ENCODE measurements at regions of chr19 and their contacts with region 1.

Region 1: GRCh38 chr19:39532233-39533002 is at the start of gene EID2B:
- DNase-seq: peak; percentile 94
- ATAC-seq: peak; percentile 96
- H3K4me3 ChIP-seq: peak within 1 kb of the TSS; percentile 98
- H3K27ac ChIP-seq: peak within 1 kb of the TSS; percentile 57
- H3K4me1 ChIP-seq: no peaks in the 10 kb centered on the region
- H3K27me3 ChIP-seq: no peaks in the 10 kb centered on the region
- CTCF ChIP-seq: peak; percentile 100; a peak in 5 of 6 replicates
- EP300 ChIP-seq: no peak
- POLR2A ChIP-seq: peak; percentile 79
- RAD21 ChIP-seq: peak; percentile 88
- polyA plus RNA-seq, gene EID2B: 5.8 to 6.1 TPM

Region 2: GRCh38 chr19:39125554-39126311 is 406.7 kb before region 1 on chr19 and contains the start of gene PAK4:
- CTCF ChIA-PET with region 1: interaction called, 4 read pairs
- POLR2A ChIA-PET with region 1: no interaction called
- RAD21 ChIA-PET with region 1: no interaction called
- SMC1A ChIA-PET with region 1: no interaction called
- in situ Hi-C with region 1: loop called (anchors 5 kb)
- intact Hi-C with region 1: loop called (anchors 10 kb)
- DNase-seq: peak; percentile 82
- ATAC-seq: peak; percentile 98
- H3K4me3 ChIP-seq: peak within 1 kb of the TSS; percentile 87
- H3K27ac ChIP-seq: peak within 1 kb of the TSS; percentile 64
- H3K4me1 ChIP-seq: peaks cover under 1% of the 10 kb centered on the region; the same call in 1 of the 2 replicates
- H3K27me3 ChIP-seq: no peaks in the 10 kb centered on the region
- CTCF ChIP-seq: no peak
- EP300 ChIP-seq: no peak
- POLR2A ChIP-seq: peak; percentile 92
- RAD21 ChIP-seq: no peak
- polyA plus RNA-seq, gene PAK4: 0.08 to 0.37 TPM

Region 3: GRCh38 chr19:39397360-39398296 is 134.8 kb before region 1 on chr19:
- CTCF ChIA-PET with region 1: interaction called, 20 read pairs
- POLR2A ChIA-PET with region 1: no interaction called
- RAD21 ChIA-PET with region 1: interaction called, 9 read pairs
- SMC1A ChIA-PET with region 1: no interaction called
- in situ Hi-C with region 1: no loop called
- intact Hi-C with region 1: no loop called
- DNase-seq: no peak
- ATAC-seq: peak; percentile 78
- H3K4me3 ChIP-seq: peak overlapping the region; percentile 26
- H3K27ac ChIP-seq: peak overlapping the region; percentile 99
- H3K4me1 ChIP-seq: peaks cover 54% of the 10 kb centered on the region
- H3K27me3 ChIP-seq: no peaks in the 10 kb centered on the region
- CTCF ChIP-seq: peak; percentile 97 to 98 (median 98); a peak in 5 of 6 replicates
- EP300 ChIP-seq: peak in 1 of 2 experiments; percentile 4; a peak in 1 of 4 replicates
- POLR2A ChIP-seq: no peak; the same call in 1 of the 2 replicates
- RAD21 ChIP-seq: peak; percentile 94

Region 4: DNA sequence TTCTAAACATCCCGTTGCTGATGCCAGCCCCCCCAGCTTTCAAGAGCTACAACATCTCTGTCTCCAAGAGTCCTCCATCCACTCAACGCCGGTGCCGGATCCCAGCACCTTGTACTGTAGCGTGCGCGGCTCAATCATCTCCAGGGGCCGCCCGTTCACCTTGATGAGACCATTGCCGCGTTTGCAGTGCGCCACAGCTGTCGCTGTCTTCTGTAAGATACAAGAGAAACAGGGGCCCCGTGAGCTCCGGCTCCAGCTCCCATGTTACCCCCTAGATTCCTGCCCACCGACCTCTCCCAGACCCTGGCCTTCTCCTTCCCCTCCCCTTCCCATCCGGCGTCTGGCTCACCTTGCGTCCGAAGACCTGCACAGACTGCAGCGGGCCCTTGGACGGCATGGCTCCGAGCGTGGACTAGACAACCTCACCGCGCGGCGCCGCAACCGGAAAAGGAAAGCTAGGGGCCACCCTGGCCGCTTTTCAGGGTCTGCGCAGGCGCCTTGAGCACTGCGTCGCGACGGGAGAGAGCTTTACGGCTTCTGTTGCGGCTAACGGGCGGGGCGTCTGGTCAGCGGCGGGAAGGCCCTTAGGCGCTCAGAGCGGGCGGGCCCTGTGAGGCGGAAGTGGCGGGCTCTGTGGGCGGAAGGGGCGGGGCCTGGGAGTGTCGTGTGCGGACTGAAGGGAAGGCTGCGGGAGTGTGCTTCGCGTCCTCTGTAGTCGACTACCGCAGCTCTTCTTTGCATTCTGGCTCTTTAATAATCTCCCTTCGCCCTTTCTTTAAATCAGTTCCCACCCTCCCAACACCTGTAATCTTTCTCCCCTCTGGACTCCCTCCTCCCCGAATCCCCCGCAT is 96.7 kb before region 1 on chr19 and contains the start of gene RPS16:
- CTCF ChIA-PET with region 1: interaction called, 63 read pairs
- POLR2A ChIA-PET with region 1: interaction called, 7 read pairs
- RAD21 ChIA-PET with region 1: interaction called, 14 read pairs
- SMC1A ChIA-PET with region 1: interaction called, 26 read pairs
- in situ Hi-C with region 1: loop called (anchors 5 kb)
- intact Hi-C with region 1: loop called (anchors 2 kb)
- DNase-seq: peak; percentile 88
- ATAC-seq: peak; percentile 88
- H3K4me3 ChIP-seq: peak within 1 kb of the TSS; percentile 97
- H3K27ac ChIP-seq: peak within 1 kb of the TSS; percentile 91
- H3K4me1 ChIP-seq: peaks cover 37% of the 10 kb centered on the region
- H3K27me3 ChIP-seq: no peaks in the 10 kb centered on the region
- CTCF ChIP-seq: no peak
- EP300 ChIP-seq: no peak
- POLR2A ChIP-seq: peak; percentile 100
- RAD21 ChIP-seq: no peak
- polyA plus RNA-seq, gene RPS16: 3,810 to 4,177 TPM

Region 5: DNA sequence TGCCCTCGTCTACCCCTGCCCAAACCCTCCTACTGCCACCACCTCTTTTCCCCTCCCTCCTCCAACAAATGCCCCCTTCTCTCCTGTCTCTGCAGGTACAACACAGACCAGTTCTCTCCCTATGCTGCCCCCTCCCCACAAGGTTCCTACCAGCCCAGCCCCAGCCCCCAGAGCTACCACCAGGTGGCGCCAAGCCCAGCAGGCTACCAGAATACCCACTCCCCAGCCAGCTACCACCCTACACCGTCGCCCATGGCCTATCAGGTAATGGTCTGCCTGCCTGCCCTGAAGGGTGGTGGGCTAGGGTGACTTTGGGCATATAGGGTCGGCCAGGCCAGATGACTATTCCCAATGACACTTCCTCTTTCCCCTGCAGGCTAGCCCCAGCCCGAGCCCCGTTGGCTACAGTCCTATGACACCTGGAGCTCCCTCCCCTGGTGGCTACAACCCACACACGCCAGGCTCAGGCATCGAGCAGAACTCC is 58.2 kb before region 1 on chr19:
- CTCF ChIA-PET with region 1: interaction called, 41 read pairs
- POLR2A ChIA-PET with region 1: no interaction called
- RAD21 ChIA-PET with region 1: interaction called, 5 read pairs
- SMC1A ChIA-PET with region 1: interaction called, 8 read pairs
- in situ Hi-C with region 1: loop called (anchors 5 kb)
- intact Hi-C with region 1: loop called (anchors 1 kb)
- DNase-seq: no peak
- ATAC-seq: peak; percentile 93
- H3K4me3 ChIP-seq: no peak overlapping the region
- H3K27ac ChIP-seq: no peak overlapping the region
- H3K4me1 ChIP-seq: no peaks in the 10 kb centered on the region
- H3K27me3 ChIP-seq: no peaks in the 10 kb centered on the region
- CTCF ChIP-seq: peak; percentile 65 to 94 (median 78)
- EP300 ChIP-seq: no peak
- POLR2A ChIP-seq: no peak
- RAD21 ChIP-seq: peak; percentile 51

Region 6: GRCh38 chr19:39502640-39503417 is 29.6 kb before region 1 on chr19:
- CTCF ChIA-PET with region 1: interaction called, 15 read pairs
- POLR2A ChIA-PET with region 1: no interaction called
- RAD21 ChIA-PET with region 1: interaction called, 5 read pairs
- SMC1A ChIA-PET with region 1: interaction called, 11 read pairs
- in situ Hi-C with region 1: no loop called
- intact Hi-C with region 1: no loop called
- DNase-seq: no peak
- ATAC-seq: peak; percentile 46
- H3K4me3 ChIP-seq: no peak overlapping the region
- H3K27ac ChIP-seq: no peak overlapping the region
- H3K4me1 ChIP-seq: peaks cover 15% of the 10 kb centered on the region
- H3K27me3 ChIP-seq: peaks cover 0 to 16% of the 10 kb centered on the region in 2 experiments; a peak in 3 of 4 replicates
- CTCF ChIP-seq: peak; percentile 70 to 80 (median 75)
- EP300 ChIP-seq: no peak
- POLR2A ChIP-seq: no peak
- RAD21 ChIP-seq: peak; percentile 30; the same call in 1 of the 2 replicates